ENCODE measurements at regions of chr19 and their contacts with region 1.

Region 1: GRCh38 chr19:23762884-23763711 is 4.4 kb upstream of the ZNF681 start:
- DNase-seq: peak; percentile 89
- H3K4me3 Mint-ChIP-seq: peak overlapping the region; percentile 87
- H3K27ac Mint-ChIP-seq: peak overlapping the region; percentile 91
- H3K4me1 Mint-ChIP-seq: peaks cover 8% of the 10 kb centered on the region
- H3K27me3 Mint-ChIP-seq: no peaks in the 10 kb centered on the region
- CTCF ChIP-seq: no peak

Region 2: GRCh38 chr19:23686621-23687423 is 76.3 kb before region 1 on chr19 and contains the start of gene ZNF675:
- CTCF ChIA-PET with region 1: no interaction called
- intact Hi-C with region 1: loop called (anchors 5 kb)
- DNase-seq: peak; percentile 87
- H3K4me3 Mint-ChIP-seq: peak within 1 kb of the TSS; percentile 98
- H3K27ac Mint-ChIP-seq: peak within 1 kb of the TSS; percentile 94
- H3K4me1 Mint-ChIP-seq: no peaks in the 10 kb centered on the region
- H3K27me3 Mint-ChIP-seq: no peaks in the 10 kb centered on the region
- CTCF ChIP-seq: no peak
- total RNA-seq, gene ZNF675: 15.6 and 16.1 TPM in 2 replicates

Region 3: GRCh38 chr19:23787106-23787505 is 24.0 kb after region 1 on chr19:
- CTCF ChIA-PET with region 1: no interaction called
- intact Hi-C with region 1: no loop called
- DNase-seq: no peak
- H3K4me3 Mint-ChIP-seq: no peak overlapping the region
- H3K27ac Mint-ChIP-seq: no peak overlapping the region
- H3K4me1 Mint-ChIP-seq: no peaks in the 10 kb centered on the region
- H3K27me3 Mint-ChIP-seq: no peaks in the 10 kb centered on the region
- CTCF ChIP-seq: no peak

Region 4: GRCh38 chr19:23810496-23810895 is 47.4 kb after region 1 on chr19:
- CTCF ChIA-PET with region 1: no interaction called
- intact Hi-C with region 1: no loop called
- DNase-seq: no peak
- H3K4me3 Mint-ChIP-seq: no peak overlapping the region
- H3K27ac Mint-ChIP-seq: no peak overlapping the region
- H3K4me1 Mint-ChIP-seq: no peaks in the 10 kb centered on the region
- H3K27me3 Mint-ChIP-seq: no peaks in the 10 kb centered on the region
- CTCF ChIP-seq: no peak

Region 5: DNA sequence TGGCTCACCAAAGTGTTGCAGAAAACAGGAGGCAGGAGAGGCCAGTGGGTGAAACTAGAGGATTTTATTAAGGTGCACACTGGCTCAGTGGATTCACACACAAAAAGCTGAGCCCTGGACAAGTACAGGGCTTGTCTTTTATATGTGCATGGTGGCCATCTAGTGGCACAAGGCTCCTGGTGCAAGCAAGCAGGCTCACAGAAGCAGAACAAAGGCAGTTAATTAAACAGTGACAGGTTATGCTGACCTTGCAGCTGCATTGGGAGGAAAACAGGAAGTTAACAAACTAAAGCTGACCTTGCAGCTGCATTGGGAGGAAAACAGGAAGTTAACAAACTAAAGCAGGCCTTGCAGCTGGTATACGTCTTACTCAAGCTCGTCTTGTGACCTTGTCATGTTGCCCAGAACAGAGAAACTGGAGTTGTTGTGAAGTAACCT is 60.9 kb after region 1 on chr19:
- CTCF ChIA-PET with region 1: no interaction called
- intact Hi-C with region 1: loop called (anchors 5 kb)
- DNase-seq: no peak
- H3K4me3 Mint-ChIP-seq: no peak overlapping the region
- H3K27ac Mint-ChIP-seq: no peak overlapping the region
- H3K4me1 Mint-ChIP-seq: peaks cover 7% of the 10 kb centered on the region
- H3K27me3 Mint-ChIP-seq: no peaks in the 10 kb centered on the region
- CTCF ChIP-seq: no peak

Measured in Calu3 (cell line).